Breast epithelium (tissue), 4 donors: ENCODE measurements at regions of chr6 and their contacts with region 1.

Region 1: GRCh38 chr6:1464781-1465370 is 75.5 kb downstream of the FOXF2 start:
- DNase-seq: no peak
- H3K4me3 ChIP-seq: no peak overlapping the region
- H3K27ac ChIP-seq: no peak overlapping the region
- H3K4me1 ChIP-seq: no peaks in the 10 kb centered on the region
- H3K27me3 ChIP-seq: no peaks in the 10 kb centered on the region
- CTCF ChIP-seq: no peak
- POLR2A ChIP-seq: no peak

Region 2: DNA sequence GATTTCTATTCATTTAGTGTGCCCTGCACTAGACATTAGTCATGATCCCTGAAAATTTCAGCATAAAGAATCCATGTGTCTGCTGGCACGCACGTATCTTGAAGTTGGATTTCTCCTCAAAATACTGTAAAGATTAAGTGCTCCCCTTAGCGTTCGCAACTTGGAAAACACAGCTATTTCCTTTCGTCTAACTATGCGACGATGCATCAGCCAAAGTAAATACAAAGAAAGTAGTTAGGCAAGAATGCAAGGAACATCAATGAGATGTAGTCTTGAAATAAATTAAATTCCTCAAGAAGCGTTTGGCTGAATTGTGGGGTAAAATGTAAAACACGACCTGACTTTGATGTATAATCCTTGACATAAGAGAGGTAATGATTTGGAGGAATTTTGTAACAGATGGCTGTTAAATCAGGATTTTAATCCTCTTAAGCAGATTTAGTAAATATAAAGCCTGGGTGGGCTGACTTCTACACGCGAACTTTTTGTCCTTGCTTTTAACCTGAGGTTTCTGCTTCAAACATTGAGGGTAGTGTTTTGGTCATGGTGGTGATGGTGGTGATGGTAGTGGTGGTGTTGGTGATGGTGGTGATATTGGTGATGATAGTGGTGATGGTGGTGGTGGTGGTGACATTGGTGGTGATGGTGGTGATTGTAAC is 12.7 kb after region 1 on chr6:
- intact Hi-C with region 1: loop called (anchors 1 kb)
- DNase-seq: no peak
- H3K4me3 ChIP-seq: no peak overlapping the region
- H3K27ac ChIP-seq: no peak overlapping the region
- H3K4me1 ChIP-seq: no peaks in the 10 kb centered on the region
- H3K27me3 ChIP-seq: no peaks in the 10 kb centered on the region
- CTCF ChIP-seq: no peak
- POLR2A ChIP-seq: no peak

Region 3: GRCh38 chr6:3009930-3010329 is 1545.1 kb after region 1 on chr6:
- intact Hi-C with region 1: loop called (anchors 5 kb)
- DNase-seq: no peak
- H3K4me3 ChIP-seq: no peak overlapping the region
- H3K27ac ChIP-seq: no peak overlapping the region
- H3K4me1 ChIP-seq: no peaks in the 10 kb centered on the region
- H3K27me3 ChIP-seq: no peaks in the 10 kb centered on the region
- CTCF ChIP-seq: no peak
- POLR2A ChIP-seq: no peak